ENCODE measurements at regions of chr19 and their contacts with region 1.

Region 1: DNA sequence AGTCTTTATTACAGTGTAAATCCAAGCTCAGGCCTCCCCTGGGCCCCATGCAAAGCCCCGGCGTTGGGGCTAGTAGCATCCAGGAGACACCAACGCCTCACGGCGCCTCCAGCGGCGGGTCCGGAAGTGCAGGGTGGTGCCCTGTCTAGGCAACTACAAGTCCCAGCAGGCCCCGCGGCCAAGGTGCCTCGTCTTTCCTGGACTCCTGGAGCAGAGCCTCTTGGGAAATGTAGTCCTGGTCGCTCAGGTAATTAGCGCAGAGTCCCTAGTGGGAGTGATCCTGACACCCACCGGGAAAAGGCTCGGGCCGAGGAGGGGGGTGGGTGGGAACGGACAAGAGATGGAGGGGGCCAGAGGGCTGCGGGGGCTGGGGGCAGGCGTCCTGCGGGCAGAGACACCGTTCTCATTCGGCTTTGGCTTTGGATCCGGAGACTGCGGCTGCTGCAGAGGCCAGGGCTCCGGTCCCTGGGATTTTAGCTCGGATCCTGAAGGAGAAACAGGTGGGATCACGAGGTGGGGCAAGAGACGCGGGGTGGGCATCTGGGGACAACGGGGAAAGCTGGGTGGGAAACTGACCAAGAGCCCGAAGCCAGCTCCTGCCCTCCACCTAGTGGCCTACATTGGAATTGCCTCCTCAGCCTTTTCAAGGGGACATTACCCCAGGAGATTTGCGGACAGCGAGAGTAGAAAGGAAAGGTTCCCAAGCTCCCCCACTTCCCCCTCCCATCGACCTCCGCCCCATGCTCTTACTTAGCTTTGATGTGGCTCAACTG is 11.4 kb downstream of the RTN2 start:
- DNase-seq: peak; percentile 99
- H3K4me3 Mint-ChIP-seq: peak overlapping the region; percentile 89
- H3K27ac Mint-ChIP-seq: peak overlapping the region; percentile 83
- H3K4me1 Mint-ChIP-seq: peaks cover 16% of the 10 kb centered on the region
- H3K27me3 Mint-ChIP-seq: peaks cover 31% of the 10 kb centered on the region

Region 2: GRCh38 chr19:45391340-45391739 is 94.2 kb before region 1 on chr19:
- CTCF ChIA-PET with region 1: no interaction called
- DNase-seq: no peak
- H3K4me3 Mint-ChIP-seq: no peak overlapping the region
- H3K27ac Mint-ChIP-seq: no peak overlapping the region
- H3K4me1 Mint-ChIP-seq: peaks cover 4% of the 10 kb centered on the region
- H3K27me3 Mint-ChIP-seq: peaks cover 45% of the 10 kb centered on the region

Region 3: GRCh38 chr19:45450012-45450333 is 35.5 kb before region 1 on chr19:
- CTCF ChIA-PET with region 1: interaction called, 11 read pairs
- DNase-seq: peak; percentile 31
- H3K4me3 Mint-ChIP-seq: peak overlapping the region; percentile 87
- H3K27ac Mint-ChIP-seq: peak overlapping the region; percentile 97
- H3K4me1 Mint-ChIP-seq: peaks cover 45% of the 10 kb centered on the region
- H3K27me3 Mint-ChIP-seq: peaks cover 11% of the 10 kb centered on the region

Region 4: GRCh38 chr19:45496349-45496953 is 11.0 kb after region 1 on chr19:
- CTCF ChIA-PET with region 1: interaction called, 32 read pairs
- DNase-seq: peak; percentile 71
- H3K4me3 Mint-ChIP-seq: peak overlapping the region; percentile 67
- H3K27ac Mint-ChIP-seq: no peak overlapping the region
- H3K4me1 Mint-ChIP-seq: peaks cover 40% of the 10 kb centered on the region
- H3K27me3 Mint-ChIP-seq: peaks cover 89% of the 10 kb centered on the region